ENCODE measurements at regions of chr17 and their contacts with region 1.

Region 1: GRCh38 chr17:20103454-20104446 is 94.6 kb downstream of the SPECC1 start:
- DNase-seq: no peak
- ATAC-seq: no peak
- H3K4me3 ChIP-seq: no peak overlapping the region
- H3K27ac ChIP-seq: no peak overlapping the region
- H3K4me1 ChIP-seq: no peaks in the 10 kb centered on the region
- H3K27me3 ChIP-seq: no peaks in the 10 kb centered on the region
- CTCF ChIP-seq: no peak

Region 2: DNA sequence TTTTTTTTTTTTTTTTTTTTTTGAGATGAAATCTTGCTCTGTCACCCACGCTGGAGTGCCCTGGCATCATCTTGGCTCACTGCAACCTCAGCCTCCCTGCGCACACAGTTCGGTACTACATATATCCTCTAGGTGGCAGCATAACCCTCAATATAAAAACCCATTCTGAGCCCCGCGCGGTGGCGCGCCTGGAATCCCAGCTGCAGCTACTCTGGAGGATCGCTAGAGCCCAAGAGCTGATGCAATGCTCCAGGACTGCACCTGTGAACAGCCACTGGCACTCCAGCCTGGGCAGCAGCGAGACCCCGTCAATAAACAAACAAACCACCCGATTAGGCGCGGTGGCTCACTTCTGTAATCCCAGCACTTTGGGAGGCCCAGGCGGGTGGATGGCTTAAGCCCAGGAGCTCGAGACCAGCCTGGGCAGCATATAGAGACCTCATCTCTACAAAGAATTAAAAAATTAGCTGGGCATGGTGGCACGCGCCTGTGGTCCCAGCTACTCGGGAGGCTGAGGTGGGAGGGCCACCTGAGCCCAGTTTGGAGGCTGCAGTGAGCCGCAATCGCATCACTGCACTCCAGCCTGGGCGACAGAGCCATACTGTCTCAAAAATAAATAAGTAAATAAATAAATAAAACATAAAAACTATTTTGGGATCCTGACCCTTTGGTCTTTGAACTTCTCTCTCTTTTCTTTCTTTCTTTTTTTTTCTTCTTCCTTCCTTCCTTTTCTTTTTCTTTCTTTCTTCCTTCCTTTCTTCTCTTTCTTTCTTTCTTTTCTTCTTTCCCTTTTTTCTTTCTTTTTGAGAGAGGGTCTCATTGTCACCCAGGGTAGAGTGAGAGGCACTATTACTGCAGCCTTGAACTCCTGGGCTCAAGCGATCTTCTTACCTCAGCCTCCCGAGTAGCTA is 110.7 kb before region 1 on chr17:
- intact Hi-C with region 1: loop called in 1 of 3 experiments (anchors 5 kb)
- DNase-seq: peak; percentile 83 to 96 (median 91)
- ATAC-seq: peak; percentile 100
- H3K4me3 ChIP-seq: no peak overlapping the region
- H3K27ac ChIP-seq: no peak overlapping the region
- H3K4me1 ChIP-seq: no peaks in the 10 kb centered on the region
- H3K27me3 ChIP-seq: no peaks in the 10 kb centered on the region
- CTCF ChIP-seq: peak; percentile 71 to 87 (median 76)

Region 3: GRCh38 chr17:20009302-20010098 is 94.2 kb before region 1 on chr17 and contains the start of gene SPECC1:
- intact Hi-C with region 1: loop called in 1 of 3 experiments (anchors 10 kb)
- DNase-seq: peak; percentile 20 to 95 (median 83)
- ATAC-seq: peak; percentile 45 to 99 (median 98)
- H3K4me3 ChIP-seq: peak within 1 kb of the TSS; percentile 42 to 73 (median 65)
- H3K27ac ChIP-seq: peak within 1 kb of the TSS in 1 of 4 donors; percentile 11
- H3K4me1 ChIP-seq: no peaks in the 10 kb centered on the region
- H3K27me3 ChIP-seq: peaks cover 0 to 14% (median 0%) of the 10 kb centered on the region in 4 donors
- CTCF ChIP-seq: peak; percentile 98 to 99 (median 99)
- total RNA-seq, gene SPECC1: 5.8 to 22.2 (median 9.0) TPM

Measured in pancreas (tissue), 10 donors.